Vagina (tissue), 2 donors: ENCODE measurements at regions of chr4 and their contacts with region 1.

Region 1: GRCh38 chr4:8403173-8403753 is 37.3 kb downstream of the ACOX3 start:
- DNase-seq: no peak
- H3K4me3 ChIP-seq: no peak overlapping the region
- H3K27ac ChIP-seq: peak overlapping the region; percentile 76
- H3K4me1 ChIP-seq: peaks cover 23% of the 10 kb centered on the region
- H3K27me3 ChIP-seq: no peaks in the 10 kb centered on the region
- CTCF ChIP-seq: peak; percentile 89 to 92 (median 91)
- POLR2A ChIP-seq: no peak

Region 2: GRCh38 chr4:8241895-8242696 is 161.2 kb before region 1 on chr4:
- intact Hi-C with region 1: loop called (anchors 2 kb)
- DNase-seq: no peak
- H3K4me3 ChIP-seq: no peak overlapping the region
- H3K27ac ChIP-seq: peak overlapping the region; percentile 79
- H3K4me1 ChIP-seq: peaks cover 10% of the 10 kb centered on the region
- H3K27me3 ChIP-seq: no peaks in the 10 kb centered on the region
- CTCF ChIP-seq: peak; percentile 95 to 99 (median 96)
- POLR2A ChIP-seq: no peak

Region 3: DNA sequence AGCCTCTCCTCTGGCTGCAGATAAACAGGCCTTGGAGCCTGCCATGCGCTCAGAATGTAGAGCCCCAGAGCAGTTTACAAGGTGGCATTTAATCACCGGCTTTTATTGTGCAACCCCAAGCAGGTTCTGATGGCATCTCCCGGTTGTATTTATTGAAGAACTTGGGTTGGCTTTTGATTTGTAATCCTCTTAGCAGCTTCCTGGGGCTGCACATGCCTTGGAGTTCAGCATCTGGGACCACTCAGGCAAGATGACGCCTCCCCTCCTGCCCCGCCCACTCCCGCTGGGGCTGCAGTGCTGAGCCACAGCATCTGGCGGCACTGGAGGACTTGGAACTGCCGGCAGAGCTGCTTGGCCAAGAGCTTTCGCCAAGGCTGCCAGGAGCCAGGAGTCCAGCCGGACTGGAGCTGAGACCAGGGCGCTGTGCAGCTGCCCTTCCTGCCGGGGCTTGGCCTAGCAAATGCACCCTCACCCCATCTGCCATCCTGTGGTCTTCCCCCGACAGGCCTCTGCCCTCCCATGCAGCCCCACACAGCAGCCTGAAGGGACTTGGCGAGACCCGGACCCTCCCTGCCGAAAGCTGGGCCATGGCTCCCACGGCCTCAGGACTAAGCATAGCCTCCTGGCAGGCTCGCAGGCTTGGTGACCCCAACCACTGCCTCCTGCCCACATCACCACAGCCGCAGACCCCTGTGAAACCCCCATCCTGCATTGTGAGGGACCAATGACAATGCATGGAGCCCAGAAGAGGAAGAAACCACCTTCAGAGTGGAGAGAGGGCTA is 128.3 kb before region 1 on chr4:
- intact Hi-C with region 1: loop called (anchors 10 kb)
- DNase-seq: peak in 1 of 2 donors; percentile 95
- H3K4me3 ChIP-seq: peak overlapping the region in 1 of 2 donors; percentile 30
- H3K27ac ChIP-seq: peak overlapping the region; percentile 89
- H3K4me1 ChIP-seq: peaks cover 94% of the 10 kb centered on the region
- H3K27me3 ChIP-seq: no peaks in the 10 kb centered on the region
- CTCF ChIP-seq: no peak
- POLR2A ChIP-seq: no peak